ENCODE measurements at regions of chr1 and their contacts with region 1.

Region 1: DNA sequence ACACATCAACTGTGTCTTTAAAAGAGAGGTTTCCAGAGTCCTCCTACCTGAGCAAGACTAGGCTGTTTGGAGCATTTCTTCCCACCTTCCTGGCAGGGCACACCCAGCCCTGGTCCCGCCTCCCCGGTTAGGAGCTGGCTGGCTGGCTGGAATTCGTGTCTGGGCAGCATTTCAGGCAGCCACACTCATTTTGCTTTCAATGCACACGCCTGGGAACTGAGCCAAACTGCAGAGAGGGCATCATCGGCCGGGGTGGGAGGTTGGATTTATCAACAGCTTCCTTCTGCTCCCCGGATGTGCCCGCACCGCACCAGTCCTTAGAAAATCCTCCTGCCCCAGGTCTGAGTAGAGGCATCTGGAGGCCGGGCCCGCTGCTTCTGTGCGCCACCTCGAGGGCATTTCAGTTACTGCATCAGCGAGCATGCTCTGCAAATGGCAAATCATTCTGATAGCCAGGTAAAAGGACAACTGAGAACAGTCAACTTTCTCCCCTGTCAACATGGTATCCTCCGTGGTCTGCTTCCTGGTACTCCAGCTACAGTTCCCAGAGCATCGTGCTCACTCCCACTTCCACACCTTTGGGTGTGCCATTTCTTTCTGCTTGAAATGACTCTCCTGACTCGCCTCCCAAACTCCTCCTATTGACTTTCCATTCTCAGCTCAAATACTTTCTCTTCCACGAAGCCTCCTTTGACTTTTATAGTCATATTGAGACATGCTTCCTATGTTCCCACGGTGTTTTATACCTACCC is 20.6 kb downstream of the TCEA3 start:
- DNase-seq: peak; percentile 62 to 83 (median 73)
- ATAC-seq: peak; percentile 92
- H3K4me3 ChIP-seq: no peak overlapping the region
- H3K4me3 Mint-ChIP-seq: no peak overlapping the region
- H3K27ac ChIP-seq: no peak overlapping the region
- H3K27ac Mint-ChIP-seq: peak overlapping the region in 5 of 9 donors; percentile 16 to 76 (median 51)
- H3K4me1 ChIP-seq: peaks cover 4 to 9% of the 10 kb centered on the region in 2 donors
- H3K4me1 Mint-ChIP-seq: peaks cover 10 to 14% (median 12%) of the 10 kb centered on the region in 7 donors
- H3K27me3 ChIP-seq: no peaks in the 10 kb centered on the region
- H3K27me3 Mint-ChIP-seq: no peaks in the 10 kb centered on the region

Region 2: GRCh38 chr1:22712502-22713271 is 691.2 kb before region 1 on chr1:
- CTCF ChIA-PET with region 1: no interaction called
- POLR2A ChIA-PET with region 1: no interaction called
- intact Hi-C with region 1: no loop called
- DNase-seq: no peak
- ATAC-seq: no peak
- H3K4me3 ChIP-seq: no peak overlapping the region
- H3K4me3 Mint-ChIP-seq: peak overlapping the region in 3 of 10 donors; percentile 57 to 73 (median 63)
- H3K27ac ChIP-seq: no peak overlapping the region
- H3K27ac Mint-ChIP-seq: no peak overlapping the region
- H3K4me1 ChIP-seq: no peaks in the 10 kb centered on the region
- H3K4me1 Mint-ChIP-seq: peaks cover 0 to 13% (median 7%) of the 10 kb centered on the region in 7 donors
- H3K27me3 ChIP-seq: peaks cover 3 to 10% of the 10 kb centered on the region in 2 donors
- H3K27me3 Mint-ChIP-seq: peaks cover 50 to 74% (median 60%) of the 10 kb centered on the region in 5 donors

Region 3: DNA sequence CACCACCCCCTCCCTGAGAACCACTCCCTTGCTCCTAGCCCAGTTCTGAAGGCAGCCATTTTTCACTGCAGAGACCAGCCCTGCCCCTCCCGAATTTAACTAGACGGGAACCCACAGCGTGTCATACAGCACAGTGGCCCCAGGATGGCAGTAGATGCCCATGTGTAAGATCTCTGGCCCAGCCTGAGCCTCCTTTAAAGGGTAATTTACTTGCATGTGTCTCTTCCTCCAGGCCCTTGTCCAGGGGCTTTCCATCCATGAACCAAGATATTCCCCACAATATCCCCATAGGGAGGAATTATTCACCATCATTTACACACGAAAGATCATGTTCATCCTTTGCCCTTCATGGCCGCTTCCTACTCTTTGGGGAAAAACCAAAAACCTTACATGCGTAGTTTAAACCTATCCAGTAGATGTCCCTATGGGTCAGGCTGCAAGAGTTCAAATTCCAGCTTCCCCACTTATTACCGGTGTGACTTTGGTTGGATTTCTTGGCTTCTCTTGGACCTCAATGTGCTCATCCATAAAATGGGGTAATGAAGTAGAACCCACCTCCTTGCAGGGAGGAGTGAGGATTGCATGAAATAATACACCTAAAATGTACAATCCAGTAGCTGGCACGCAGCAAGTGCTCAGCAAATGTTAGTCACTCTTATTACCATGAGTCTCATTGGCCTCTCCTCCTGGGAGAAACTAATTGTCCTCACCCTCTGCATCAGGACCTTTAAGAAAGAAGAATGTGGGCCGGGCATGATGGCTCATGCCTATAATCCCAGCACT is 427.3 kb before region 1 on chr1:
- CTCF ChIA-PET with region 1: no interaction called
- POLR2A ChIA-PET with region 1: no interaction called
- intact Hi-C with region 1: loop called in 1 of 2 experiments (anchors 5 kb)
- DNase-seq: peak in 8 of 9 donors; percentile 11 to 46 (median 38)
- ATAC-seq: peak; percentile 95
- H3K4me3 ChIP-seq: no peak overlapping the region
- H3K4me3 Mint-ChIP-seq: no peak overlapping the region
- H3K27ac ChIP-seq: no peak overlapping the region
- H3K27ac Mint-ChIP-seq: peak overlapping the region in 1 of 9 donors; percentile 72
- H3K4me1 ChIP-seq: no peaks in the 10 kb centered on the region
- H3K4me1 Mint-ChIP-seq: peaks cover 0 to 3% (median 0%) of the 10 kb centered on the region in 7 donors
- H3K27me3 ChIP-seq: no peaks in the 10 kb centered on the region
- H3K27me3 Mint-ChIP-seq: peaks cover 20 to 39% (median 22%) of the 10 kb centered on the region in 5 donors

Region 4: DNA sequence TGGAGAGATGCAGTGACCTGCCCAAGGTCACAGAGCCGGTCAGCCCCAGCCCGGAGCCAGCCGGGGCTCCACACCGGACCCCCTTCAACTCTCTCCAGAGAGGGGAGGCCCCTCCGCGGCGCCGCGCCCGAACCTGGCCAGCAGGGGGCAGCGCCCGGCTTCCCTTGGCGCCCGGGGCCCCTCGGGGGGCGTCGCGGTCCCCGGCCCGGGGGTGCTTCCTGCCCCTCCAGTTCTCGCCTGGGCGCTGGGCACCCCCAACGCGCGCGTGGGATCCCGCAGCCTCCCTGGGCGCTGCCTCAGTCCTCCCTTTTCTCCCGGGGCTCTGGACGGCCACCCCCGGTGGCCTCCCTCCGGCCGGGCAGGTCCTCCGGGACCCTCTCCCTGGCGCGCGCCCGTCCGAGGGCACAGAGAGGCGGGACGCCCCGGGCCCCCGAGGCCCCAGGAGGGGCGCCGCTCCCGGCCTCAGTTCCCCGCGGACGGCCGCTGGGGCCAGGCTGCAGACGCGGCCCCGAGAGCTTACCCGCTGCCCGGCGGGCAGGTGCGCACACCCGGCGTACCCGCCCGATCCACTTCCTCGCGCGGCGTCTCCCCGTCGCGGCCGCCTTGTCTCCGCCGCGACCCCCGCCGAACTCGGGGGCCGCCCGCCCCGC is 187.0 kb before region 1 on chr1:
- CTCF ChIA-PET with region 1: no interaction called
- POLR2A ChIA-PET with region 1: no interaction called
- intact Hi-C with region 1: loop called in 1 of 2 experiments (anchors 2 kb)
- DNase-seq: peak in 7 of 9 donors; percentile 11 to 54 (median 28)
- ATAC-seq: peak; percentile 52
- H3K4me3 ChIP-seq: no peak overlapping the region
- H3K4me3 Mint-ChIP-seq: peak overlapping the region in 6 of 10 donors; percentile 11 to 75 (median 55)
- H3K27ac ChIP-seq: no peak overlapping the region
- H3K27ac Mint-ChIP-seq: no peak overlapping the region
- H3K4me1 ChIP-seq: no peaks in the 10 kb centered on the region
- H3K4me1 Mint-ChIP-seq: peaks cover 0 to 14% (median 9%) of the 10 kb centered on the region in 7 donors
- H3K27me3 ChIP-seq: peaks cover 0 to 11% of the 10 kb centered on the region in 2 donors
- H3K27me3 Mint-ChIP-seq: peaks cover 70 to 79% (median 72%) of the 10 kb centered on the region in 5 donors

Region 5: DNA sequence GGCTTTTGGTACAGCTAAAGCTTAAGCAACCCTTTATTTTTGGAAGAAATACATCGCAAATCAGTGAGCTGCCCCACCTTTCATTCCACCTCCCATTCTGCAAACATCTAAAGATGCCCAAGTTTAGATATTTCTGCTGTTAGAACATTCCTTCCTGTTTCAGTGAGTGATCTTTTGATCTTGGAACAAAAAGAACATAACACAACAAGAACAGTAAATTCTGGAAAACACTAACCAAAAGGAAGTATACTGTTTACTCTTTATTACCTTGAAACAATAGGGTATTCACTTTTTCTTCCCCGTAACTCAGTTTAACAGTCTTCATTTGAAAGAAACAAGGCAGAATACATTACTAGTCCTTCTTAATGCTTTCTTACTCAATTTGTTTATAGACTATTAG is 100.4 kb before region 1 on chr1:
- CTCF ChIA-PET with region 1: no interaction called
- POLR2A ChIA-PET with region 1: no interaction called
- intact Hi-C with region 1: no loop called
- DNase-seq: no peak
- ATAC-seq: no peak
- H3K4me3 ChIP-seq: no peak overlapping the region
- H3K4me3 Mint-ChIP-seq: no peak overlapping the region
- H3K27ac ChIP-seq: no peak overlapping the region
- H3K27ac Mint-ChIP-seq: peak overlapping the region in 7 of 9 donors; percentile 0 to 69 (median 47)
- H3K4me1 ChIP-seq: no peaks in the 10 kb centered on the region
- H3K4me1 Mint-ChIP-seq: peaks cover 0 to 15% (median 5%) of the 10 kb centered on the region in 7 donors
- H3K27me3 ChIP-seq: no peaks in the 10 kb centered on the region
- H3K27me3 Mint-ChIP-seq: no peaks in the 10 kb centered on the region

Region 6: GRCh38 chr1:23322770-23323169 is 81.1 kb before region 1 on chr1:
- CTCF ChIA-PET with region 1: no interaction called
- POLR2A ChIA-PET with region 1: no interaction called
- intact Hi-C with region 1: loop called in 1 of 2 experiments (anchors 5 kb)
- DNase-seq: no peak
- ATAC-seq: no peak
- H3K4me3 ChIP-seq: no peak overlapping the region
- H3K4me3 Mint-ChIP-seq: no peak overlapping the region
- H3K27ac ChIP-seq: no peak overlapping the region
- H3K27ac Mint-ChIP-seq: peak overlapping the region in 3 of 9 donors; percentile 28 to 84 (median 46)
- H3K4me1 ChIP-seq: no peaks in the 10 kb centered on the region
- H3K4me1 Mint-ChIP-seq: peaks cover 19 to 49% (median 28%) of the 10 kb centered on the region in 7 donors
- H3K27me3 ChIP-seq: no peaks in the 10 kb centered on the region
- H3K27me3 Mint-ChIP-seq: no peaks in the 10 kb centered on the region

Region 7: GRCh38 chr1:23436520-23437354 is 32.8 kb after region 1 on chr1:
- CTCF ChIA-PET with region 1: no interaction called
- POLR2A ChIA-PET with region 1: no interaction called
- intact Hi-C with region 1: no loop called
- DNase-seq: peak in 6 of 9 donors; percentile 7 to 35 (median 24)
- ATAC-seq: peak; percentile 78
- H3K4me3 ChIP-seq: no peak overlapping the region
- H3K4me3 Mint-ChIP-seq: peak overlapping the region in 3 of 10 donors; percentile 13 to 44 (median 39)
- H3K27ac ChIP-seq: no peak overlapping the region
- H3K27ac Mint-ChIP-seq: no peak overlapping the region
- H3K4me1 ChIP-seq: no peaks in the 10 kb centered on the region
- H3K4me1 Mint-ChIP-seq: no peaks in the 10 kb centered on the region
- H3K27me3 ChIP-seq: no peaks in the 10 kb centered on the region
- H3K27me3 Mint-ChIP-seq: peaks cover 0 to 20% (median 0%) of the 10 kb centered on the region in 5 donors